OCI-LY7 (cell line): ENCODE measurements at regions of chr21 and their contacts with region 1.

Region 1: GRCh38 chr21:36504067-36505058 is 24.4 kb upstream of the CLDN14 start:
- DNase-seq: peak; percentile 71
- H3K4me3 ChIP-seq: no peak overlapping the region
- H3K27ac ChIP-seq: no peak overlapping the region
- H3K4me1 ChIP-seq: peaks cover 38% of the 10 kb centered on the region
- CTCF ChIP-seq: peak; percentile 99

Region 2: DNA sequence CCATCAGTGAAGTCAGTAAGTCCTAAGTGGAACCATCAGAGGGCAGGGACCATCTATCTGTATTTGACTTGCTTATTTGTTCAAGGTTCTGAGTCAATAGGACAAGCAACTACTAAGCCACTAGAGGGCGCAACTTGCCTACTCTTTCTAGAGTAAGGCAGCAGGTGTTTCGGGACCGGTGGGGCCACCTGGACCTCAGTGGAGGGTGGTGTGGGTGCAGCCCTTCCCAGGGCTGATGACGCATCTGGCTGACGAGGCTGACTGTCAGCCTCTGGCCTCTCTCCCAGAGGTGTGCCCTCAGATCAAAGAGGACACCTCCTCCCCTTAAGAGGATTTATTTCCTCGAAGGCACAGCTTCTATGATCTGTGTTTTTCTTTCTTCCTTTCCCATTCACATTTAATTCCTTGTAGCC is 362.8 kb before region 1 on chr21:
- CTCF ChIA-PET with region 1: no interaction called
- POLR2A ChIA-PET with region 1: interaction called, 3 read pairs
- intact Hi-C with region 1: loop called (anchors 5 kb)
- DNase-seq: peak; percentile 96
- H3K4me3 ChIP-seq: no peak overlapping the region
- H3K27ac ChIP-seq: no peak overlapping the region
- H3K4me1 ChIP-seq: peaks cover 10% of the 10 kb centered on the region
- CTCF ChIP-seq: peak; percentile 96

Region 3: DNA sequence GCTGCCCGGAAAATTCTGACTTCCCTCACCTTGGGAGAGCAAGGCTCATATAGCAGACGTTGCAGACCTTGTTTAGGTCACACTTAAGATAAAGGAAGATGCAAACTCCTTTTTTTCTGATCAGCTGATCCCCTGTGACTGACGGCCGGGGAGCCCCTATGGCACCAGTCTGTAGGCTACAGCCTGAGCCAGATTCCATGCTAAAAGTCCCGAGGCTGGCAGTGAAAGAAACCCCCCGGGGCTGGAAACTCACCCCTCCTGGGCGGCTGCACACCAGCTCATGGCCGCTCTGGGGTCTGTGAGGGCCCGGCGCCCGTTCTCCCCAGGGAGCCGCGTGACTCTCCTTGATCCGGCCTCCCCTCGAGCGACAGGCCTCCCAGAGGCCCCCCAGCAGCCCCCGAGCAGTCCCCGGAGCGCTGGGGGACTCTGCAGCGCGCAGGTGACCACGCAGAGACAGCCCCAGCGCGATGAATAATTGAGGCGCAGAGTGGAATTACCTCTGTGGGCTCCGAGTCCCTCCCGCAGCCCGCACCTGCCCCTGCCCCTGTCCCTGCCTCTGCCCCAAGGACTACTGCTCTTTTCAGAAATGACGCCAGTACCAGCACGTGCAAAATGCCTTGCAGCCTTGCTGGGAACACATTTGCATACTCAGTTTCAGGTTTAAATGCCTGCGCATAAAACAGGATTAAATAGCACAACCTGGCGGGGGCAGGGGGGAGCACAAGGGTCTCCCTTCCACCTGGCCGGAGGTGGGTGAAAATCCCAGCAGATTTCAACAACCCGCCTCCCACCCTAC is 38.1 kb after region 1 on chr21:
- CTCF ChIA-PET with region 1: no interaction called
- POLR2A ChIA-PET with region 1: no interaction called
- intact Hi-C with region 1: loop called (anchors 1 kb)
- DNase-seq: peak; percentile 80
- H3K4me3 ChIP-seq: peak overlapping the region; percentile 17
- H3K27ac ChIP-seq: no peak overlapping the region
- H3K4me1 ChIP-seq: peaks cover 20% of the 10 kb centered on the region
- CTCF ChIP-seq: peak; percentile 73

Region 4: DNA sequence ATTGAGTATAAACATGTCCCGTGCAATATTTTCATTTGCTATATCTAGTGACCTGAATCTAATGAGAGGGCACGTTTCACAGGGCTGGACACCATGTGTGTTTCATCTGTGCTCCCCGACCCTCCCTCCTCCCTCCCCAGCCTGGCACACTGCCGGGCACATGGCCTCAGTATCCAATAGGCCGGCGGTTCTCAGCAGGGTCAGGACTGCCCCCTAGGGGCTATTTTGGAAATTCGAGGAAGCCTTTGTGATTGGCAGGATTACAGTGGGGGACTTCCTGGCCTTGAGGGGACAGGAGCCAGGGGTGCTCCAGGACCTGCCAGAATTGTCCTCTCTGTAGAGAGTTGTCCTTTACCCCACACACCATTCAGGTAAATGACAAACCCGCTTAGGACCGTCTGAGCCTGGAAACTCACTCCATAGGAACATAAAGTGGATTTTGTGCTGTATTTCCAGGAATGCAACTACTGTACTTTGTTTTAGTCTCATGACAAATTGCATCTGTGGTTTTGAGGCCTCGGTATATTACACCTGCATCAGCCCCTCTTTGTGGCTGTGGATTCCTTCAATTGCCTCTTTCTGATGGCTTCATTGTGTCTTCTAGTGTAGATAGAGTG is 85.1 kb after region 1 on chr21:
- CTCF ChIA-PET with region 1: interaction called, 6 read pairs
- POLR2A ChIA-PET with region 1: no interaction called
- intact Hi-C with region 1: loop called (anchors 1 kb)
- DNase-seq: peak; percentile 72
- H3K4me3 ChIP-seq: no peak overlapping the region
- H3K27ac ChIP-seq: no peak overlapping the region
- H3K4me1 ChIP-seq: no peaks in the 10 kb centered on the region
- CTCF ChIP-seq: peak; percentile 92

Region 5: DNA sequence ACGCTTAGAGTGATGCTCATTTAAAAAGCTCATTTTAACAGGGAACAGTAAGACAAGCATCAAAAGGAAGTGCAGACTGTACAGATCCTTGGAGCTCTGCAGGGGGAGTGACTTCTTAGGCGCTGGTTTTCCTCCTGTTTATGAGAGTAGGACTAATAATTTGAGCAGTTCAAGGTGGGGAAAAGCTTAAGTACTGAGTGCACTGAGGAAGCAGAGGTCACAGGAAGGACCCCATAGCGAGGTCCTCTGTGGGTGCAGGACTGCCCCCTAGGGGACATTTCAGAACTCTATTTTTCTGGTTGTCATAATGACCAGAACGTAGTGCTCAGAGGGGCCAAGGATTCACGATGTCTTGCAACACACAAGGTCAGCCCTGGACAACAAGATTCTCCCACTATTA is 350.0 kb after region 1 on chr21:
- CTCF ChIA-PET with region 1: interaction called, 3 read pairs
- POLR2A ChIA-PET with region 1: no interaction called
- intact Hi-C with region 1: loop called (anchors 10 kb)
- DNase-seq: peak; percentile 63
- H3K4me3 ChIP-seq: no peak overlapping the region
- H3K27ac ChIP-seq: no peak overlapping the region
- H3K4me1 ChIP-seq: no peaks in the 10 kb centered on the region
- CTCF ChIP-seq: peak; percentile 85

Region 6: DNA sequence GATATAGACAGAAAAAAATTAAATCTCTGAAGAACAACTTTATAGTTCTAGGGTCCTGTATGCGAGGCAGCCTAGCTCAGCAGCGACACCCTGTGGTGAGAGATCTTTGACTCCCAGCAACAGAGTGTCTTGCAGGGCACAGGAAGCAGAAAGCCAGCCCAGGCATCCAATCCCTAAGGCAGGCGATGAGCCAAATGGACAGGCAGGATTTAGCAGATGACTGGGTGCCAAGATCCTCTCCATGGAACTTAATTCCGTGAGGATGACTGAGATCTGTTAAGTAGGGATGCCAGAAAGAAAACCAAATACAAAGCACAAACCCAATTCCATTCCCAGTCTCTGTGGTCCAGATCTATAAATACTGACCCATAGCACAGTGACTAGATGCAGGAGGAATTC is 423.4 kb after region 1 on chr21:
- CTCF ChIA-PET with region 1: interaction called, 3 read pairs
- POLR2A ChIA-PET with region 1: no interaction called
- intact Hi-C with region 1: loop called (anchors 5 kb)
- DNase-seq: peak; percentile 70
- H3K4me3 ChIP-seq: no peak overlapping the region
- H3K27ac ChIP-seq: no peak overlapping the region
- H3K4me1 ChIP-seq: no peaks in the 10 kb centered on the region
- CTCF ChIP-seq: peak; percentile 99